A549 (cell line): ENCODE measurements at regions of chr3 and their contacts with region 1.

Region 1: GRCh38 chr3:184777336-184778004 is 34.5 kb upstream of the VPS8 start:
- DNase-seq: peak; percentile 82 to 91
- ATAC-seq: peak; percentile 89 to 97
- H3K4me3 ChIP-seq: no peak overlapping the region
- H3K27ac ChIP-seq: no peak overlapping the region
- H3K4me1 ChIP-seq: no peaks in the 10 kb centered on the region
- CTCF ChIP-seq: peak; percentile 74
- EP300 ChIP-seq: no peak
- POLR2A ChIP-seq: no peak
- RAD21 ChIP-seq: peak; percentile 87 to 90

Region 2: DNA sequence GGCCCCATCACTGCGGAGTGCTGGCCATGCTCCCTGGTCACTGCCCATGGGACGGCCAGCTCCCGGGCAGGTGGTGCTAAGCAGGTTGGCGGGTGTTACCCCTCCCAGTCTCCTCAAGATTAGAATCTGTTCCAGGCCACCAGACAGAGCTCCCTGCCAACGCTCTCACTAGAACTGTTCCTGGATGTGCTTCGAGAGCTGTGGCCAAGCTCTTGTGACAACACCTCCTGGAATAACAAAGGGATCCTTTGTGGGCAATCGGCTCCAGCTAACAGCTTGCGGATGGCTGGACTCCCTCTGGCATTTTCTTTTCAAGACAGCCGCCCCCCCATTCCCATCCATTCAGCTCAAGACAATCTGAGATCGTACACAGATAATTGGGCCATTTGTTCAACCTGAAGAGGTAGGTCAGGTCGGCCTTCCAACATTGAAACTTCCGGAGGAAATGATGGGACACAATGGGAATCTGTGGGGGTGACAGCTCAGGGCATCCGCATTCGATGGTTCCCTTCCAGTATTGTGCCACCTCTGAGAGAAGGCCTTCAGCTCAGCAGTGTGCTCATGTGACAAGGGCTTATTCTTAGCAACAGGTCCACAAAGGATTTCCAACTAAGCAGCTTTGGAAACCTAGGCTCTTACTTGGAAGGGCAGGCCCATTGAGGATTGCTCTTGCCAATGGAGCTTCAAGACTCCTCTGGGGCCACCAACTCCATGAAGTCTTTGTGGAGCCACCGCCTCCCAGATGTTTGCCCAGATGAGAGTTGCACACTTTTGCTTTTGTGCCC is 227.5 kb before region 1 on chr3:
- CTCF ChIA-PET with region 1: interaction called, 10 read pairs
- POLR2A ChIA-PET with region 1: no interaction called
- DNase-seq: no peak
- ATAC-seq: no peak
- H3K4me3 ChIP-seq: no peak overlapping the region
- H3K27ac ChIP-seq: no peak overlapping the region
- H3K4me1 ChIP-seq: no peaks in the 10 kb centered on the region
- CTCF ChIP-seq: no peak
- EP300 ChIP-seq: no peak
- POLR2A ChIP-seq: no peak
- RAD21 ChIP-seq: no peak

Region 3: DNA sequence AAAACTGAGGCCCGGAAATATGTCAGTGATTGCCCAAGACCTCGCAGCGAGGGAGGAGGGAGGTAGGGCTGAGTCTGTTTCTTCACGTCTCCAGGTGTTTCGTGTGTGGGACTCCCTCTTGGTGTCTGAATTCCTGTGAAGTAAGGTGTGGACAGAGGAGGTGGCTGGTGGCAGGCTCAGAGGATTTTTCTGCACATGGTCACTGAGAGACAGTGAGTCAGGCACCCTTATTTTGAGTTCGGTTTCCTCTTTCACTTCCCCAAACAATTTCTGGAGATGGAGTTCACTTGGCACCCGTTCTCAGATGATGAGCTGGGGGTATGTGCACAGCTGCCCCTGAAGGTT is 11.8 kb before region 1 on chr3:
- CTCF ChIA-PET with region 1: interaction called, 23 read pairs
- POLR2A ChIA-PET with region 1: no interaction called
- DNase-seq: no peak
- ATAC-seq: no peak
- H3K4me3 ChIP-seq: no peak overlapping the region
- H3K27ac ChIP-seq: no peak overlapping the region
- H3K4me1 ChIP-seq: no peaks in the 10 kb centered on the region
- CTCF ChIP-seq: no peak
- EP300 ChIP-seq: no peak
- POLR2A ChIP-seq: no peak
- RAD21 ChIP-seq: no peak

Region 4: DNA sequence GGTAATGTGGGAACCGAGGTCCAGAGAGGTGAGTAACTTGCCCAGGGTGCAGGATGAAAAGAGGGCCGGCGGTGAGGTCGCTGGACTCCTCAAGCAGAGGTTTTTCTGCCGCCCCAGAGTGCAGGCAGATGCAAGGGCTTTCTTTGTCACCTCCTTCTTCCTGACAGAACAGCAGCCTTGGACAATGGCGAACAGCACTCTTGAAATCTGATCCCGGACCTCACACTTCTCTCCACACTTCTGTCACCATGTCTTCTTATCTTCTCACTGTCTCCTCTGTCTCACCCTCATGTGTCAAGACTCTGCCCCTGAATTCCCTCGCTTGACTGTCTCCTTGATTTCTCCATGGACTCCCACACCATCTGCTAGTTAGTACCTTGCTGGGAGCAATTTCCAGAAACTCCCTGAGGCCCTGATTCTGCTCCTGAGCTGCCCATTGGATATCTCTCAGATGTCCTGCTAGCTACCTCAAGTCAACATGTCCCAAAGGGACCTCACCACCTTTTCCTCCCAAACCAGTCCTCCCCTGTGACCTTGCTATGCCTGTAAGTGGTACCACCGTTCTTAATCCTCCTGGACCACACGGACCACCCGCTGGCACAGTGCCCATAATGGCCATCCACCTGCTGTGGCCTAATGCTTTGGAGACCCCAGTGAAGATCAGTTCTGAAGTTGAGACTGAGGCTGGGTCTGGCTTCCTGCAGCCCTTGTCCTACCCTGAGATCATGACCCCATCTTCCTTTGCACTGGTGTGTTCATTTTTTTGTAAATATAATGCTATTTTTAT is 19.3 kb after region 1 on chr3:
- CTCF ChIA-PET with region 1: interaction called, 13 read pairs
- POLR2A ChIA-PET with region 1: no interaction called
- DNase-seq: no peak
- ATAC-seq: no peak
- H3K4me3 ChIP-seq: no peak overlapping the region
- H3K27ac ChIP-seq: no peak overlapping the region
- H3K4me1 ChIP-seq: no peaks in the 10 kb centered on the region
- CTCF ChIP-seq: no peak
- EP300 ChIP-seq: no peak
- POLR2A ChIP-seq: no peak
- RAD21 ChIP-seq: no peak